ENCODE measurements at regions of chr6 and their contacts with region 1.

Region 1: GRCh38 chr6:143912671-143913070 is 48.4 kb downstream of the ZC2HC1B start:
- DNase-seq: no peak
- ATAC-seq: no peak
- H3K4me3 ChIP-seq: no peak overlapping the region
- H3K4me3 Mint-ChIP-seq: no peak overlapping the region
- H3K27ac ChIP-seq: no peak overlapping the region
- H3K27ac Mint-ChIP-seq: no peak overlapping the region
- H3K4me1 ChIP-seq: no peaks in the 10 kb centered on the region
- H3K4me1 Mint-ChIP-seq: no peaks in the 10 kb centered on the region
- H3K27me3 ChIP-seq: no peaks in the 10 kb centered on the region
- H3K27me3 Mint-ChIP-seq: no peaks in the 10 kb centered on the region

Region 2: GRCh38 chr6:143958839-143959399 is 46.2 kb after region 1 on chr6:
- CTCF ChIA-PET with region 1: no interaction called
- POLR2A ChIA-PET with region 1: no interaction called
- DNase-seq: no peak
- ATAC-seq: no peak
- H3K4me3 ChIP-seq: no peak overlapping the region
- H3K4me3 Mint-ChIP-seq: no peak overlapping the region
- H3K27ac ChIP-seq: no peak overlapping the region
- H3K27ac Mint-ChIP-seq: no peak overlapping the region
- H3K4me1 ChIP-seq: no peaks in the 10 kb centered on the region
- H3K4me1 Mint-ChIP-seq: no peaks in the 10 kb centered on the region
- H3K27me3 ChIP-seq: no peaks in the 10 kb centered on the region
- H3K27me3 Mint-ChIP-seq: peaks cover 0 to 2% of the 10 kb centered on the region in 2 donors

Region 3: GRCh38 chr6:143986463-143987065 is 73.9 kb after region 1 on chr6:
- CTCF ChIA-PET with region 1: no interaction called
- POLR2A ChIA-PET with region 1: interaction called in 1 of 2 experiments, 10 read pairs
- DNase-seq: no peak
- ATAC-seq: no peak
- H3K4me3 ChIP-seq: no peak overlapping the region
- H3K4me3 Mint-ChIP-seq: no peak overlapping the region
- H3K27ac ChIP-seq: no peak overlapping the region
- H3K27ac Mint-ChIP-seq: no peak overlapping the region
- H3K4me1 ChIP-seq: no peaks in the 10 kb centered on the region
- H3K4me1 Mint-ChIP-seq: no peaks in the 10 kb centered on the region
- H3K27me3 ChIP-seq: no peaks in the 10 kb centered on the region
- H3K27me3 Mint-ChIP-seq: peaks cover 0 to 2% of the 10 kb centered on the region in 2 donors